ENCODE measurements at regions of chr16 and their contacts with region 1.

Region 1: DNA sequence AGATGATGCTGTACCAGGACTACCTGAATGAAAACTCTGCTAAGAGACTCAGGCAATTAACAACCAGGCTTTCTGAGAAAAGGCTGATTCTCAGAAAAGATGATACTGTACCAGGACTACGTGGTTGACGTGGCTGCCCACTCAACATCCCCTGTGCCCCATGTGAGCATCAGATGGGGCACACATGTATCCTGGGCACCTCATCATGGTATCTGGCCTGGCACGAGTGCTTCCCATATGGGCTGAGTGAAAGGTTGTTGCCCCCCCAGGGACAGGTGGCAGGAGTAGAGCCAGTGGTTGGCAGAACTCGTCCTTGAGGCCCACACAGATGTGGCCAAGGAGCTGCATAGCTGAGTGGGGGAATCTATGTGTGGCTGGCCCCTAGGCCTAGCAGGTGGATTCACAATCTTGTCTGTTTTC is 3.5 kb upstream of the CES4A start:
- DNase-seq: peak; percentile 91
- H3K4me3 Mint-ChIP-seq: peak overlapping the region; percentile 55
- H3K27ac Mint-ChIP-seq: peak overlapping the region; percentile 100
- H3K4me1 Mint-ChIP-seq: peaks cover 63% of the 10 kb centered on the region
- H3K27me3 Mint-ChIP-seq: no peaks in the 10 kb centered on the region

Region 2: GRCh38 chr16:67000384-67001351 is 15.8 kb after region 1 on chr16:
- CTCF ChIA-PET with region 1: interaction called, 3 read pairs
- POLR2A ChIA-PET with region 1: interaction called, 21 read pairs
- intact Hi-C with region 1: loop called (anchors 1 kb)
- DNase-seq: peak; percentile 74
- H3K4me3 Mint-ChIP-seq: peak overlapping the region; percentile 85
- H3K27ac Mint-ChIP-seq: peak overlapping the region; percentile 82
- H3K4me1 Mint-ChIP-seq: peaks cover 26% of the 10 kb centered on the region
- H3K27me3 Mint-ChIP-seq: no peaks in the 10 kb centered on the region

Region 3: GRCh38 chr16:67183627-67184328 is 198.9 kb after region 1 on chr16 and contains the start of gene MATCAP1:
- CTCF ChIA-PET with region 1: interaction called, 13 read pairs
- POLR2A ChIA-PET with region 1: no interaction called
- intact Hi-C with region 1: loop called (anchors 2 kb)
- DNase-seq: peak; percentile 96
- H3K4me3 Mint-ChIP-seq: no peak within 1 kb of the TSS
- H3K27ac Mint-ChIP-seq: no peak within 1 kb of the TSS
- H3K4me1 Mint-ChIP-seq: peaks cover 14% of the 10 kb centered on the region
- H3K27me3 Mint-ChIP-seq: peaks cover 8% of the 10 kb centered on the region
- total RNA-seq, gene MATCAP1: 37.3 to 38.3 TPM

Region 4: GRCh38 chr16:67311607-67312488 is 326.9 kb after region 1 on chr16:
- CTCF ChIA-PET with region 1: no interaction called
- POLR2A ChIA-PET with region 1: no interaction called
- intact Hi-C with region 1: loop called (anchors 1 kb)
- DNase-seq: peak; percentile 95
- H3K4me3 Mint-ChIP-seq: peak overlapping the region; percentile 20
- H3K27ac Mint-ChIP-seq: peak overlapping the region; percentile 95
- H3K4me1 Mint-ChIP-seq: peaks cover 41% of the 10 kb centered on the region
- H3K27me3 Mint-ChIP-seq: no peaks in the 10 kb centered on the region

Measured in activated CD4-positive, alpha-beta memory T cell treated with anti-CD3 and anti-CD28 coated beads for 36 hours (primary cell).